MCF 10A (cell line): ENCODE measurements at regions of chr1 and their contacts with region 1.

Region 1: GRCh38 chr1:32063261-32063681 is 9.5 kb upstream of the TMEM39B start:
- DNase-seq: peak; percentile 59
- H3K4me3 Mint-ChIP-seq: no peak overlapping the region
- H3K27ac Mint-ChIP-seq: peak overlapping the region; percentile 55
- H3K4me1 Mint-ChIP-seq: peaks cover 18% of the 10 kb centered on the region
- H3K27me3 Mint-ChIP-seq: no peaks in the 10 kb centered on the region
- CTCF ChIP-seq: peak; percentile 47

Region 2: GRCh38 chr1:31923901-31924535 is 139.3 kb before region 1 on chr1:
- CTCF ChIA-PET with region 1: no interaction called
- POLR2A ChIA-PET with region 1: no interaction called
- intact Hi-C with region 1: no loop called
- DNase-seq: no peak
- H3K4me3 Mint-ChIP-seq: peak overlapping the region; percentile 28
- H3K27ac Mint-ChIP-seq: peak overlapping the region; percentile 39
- H3K4me1 Mint-ChIP-seq: peaks cover 42% of the 10 kb centered on the region
- H3K27me3 Mint-ChIP-seq: no peaks in the 10 kb centered on the region
- CTCF ChIP-seq: no peak

Region 3: DNA sequence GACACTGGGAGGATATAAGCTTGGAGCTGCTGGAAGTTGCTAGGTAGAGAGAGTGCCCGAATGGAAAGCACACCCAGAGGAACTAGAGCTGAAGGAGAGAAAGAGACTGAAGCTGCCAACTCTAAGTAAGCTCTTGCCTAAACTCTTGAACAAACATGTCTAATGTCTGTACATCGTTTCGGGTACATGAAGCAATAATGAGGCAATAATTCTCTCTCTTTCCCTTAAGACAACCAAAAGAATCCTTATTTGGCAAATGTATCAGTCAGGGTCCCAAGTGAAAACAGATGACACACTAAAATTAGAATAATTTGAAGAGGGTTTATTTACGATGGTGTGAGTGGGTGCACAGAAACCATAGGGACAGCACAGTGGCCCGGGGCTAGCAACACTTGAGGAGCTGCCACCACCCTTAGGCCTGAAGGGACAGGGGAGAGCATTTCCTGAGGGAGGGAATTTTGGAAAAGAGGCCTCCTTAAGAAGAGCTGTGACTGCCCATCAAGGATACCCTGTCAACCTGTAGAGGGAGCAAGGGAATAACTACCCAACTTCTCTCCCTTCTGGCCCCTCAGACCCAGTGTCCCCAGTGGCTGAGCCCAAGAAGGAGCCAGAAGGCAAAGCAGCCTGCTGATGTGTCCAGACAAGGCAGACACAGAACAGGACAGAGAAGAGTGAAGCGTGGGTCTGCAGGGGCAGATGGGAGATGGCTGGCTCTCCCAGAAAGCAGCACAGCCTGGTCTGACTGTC is 85.7 kb before region 1 on chr1:
- CTCF ChIA-PET with region 1: no interaction called
- POLR2A ChIA-PET with region 1: interaction called, 3 read pairs
- intact Hi-C with region 1: loop called (anchors 5 kb)
- DNase-seq: peak; percentile 61
- H3K4me3 Mint-ChIP-seq: no peak overlapping the region
- H3K27ac Mint-ChIP-seq: peak overlapping the region; percentile 65
- H3K4me1 Mint-ChIP-seq: peaks cover 18% of the 10 kb centered on the region
- H3K27me3 Mint-ChIP-seq: no peaks in the 10 kb centered on the region
- CTCF ChIP-seq: no peak